ENCODE measurements at regions of chr1 and their contacts with region 1.

Region 1: DNA sequence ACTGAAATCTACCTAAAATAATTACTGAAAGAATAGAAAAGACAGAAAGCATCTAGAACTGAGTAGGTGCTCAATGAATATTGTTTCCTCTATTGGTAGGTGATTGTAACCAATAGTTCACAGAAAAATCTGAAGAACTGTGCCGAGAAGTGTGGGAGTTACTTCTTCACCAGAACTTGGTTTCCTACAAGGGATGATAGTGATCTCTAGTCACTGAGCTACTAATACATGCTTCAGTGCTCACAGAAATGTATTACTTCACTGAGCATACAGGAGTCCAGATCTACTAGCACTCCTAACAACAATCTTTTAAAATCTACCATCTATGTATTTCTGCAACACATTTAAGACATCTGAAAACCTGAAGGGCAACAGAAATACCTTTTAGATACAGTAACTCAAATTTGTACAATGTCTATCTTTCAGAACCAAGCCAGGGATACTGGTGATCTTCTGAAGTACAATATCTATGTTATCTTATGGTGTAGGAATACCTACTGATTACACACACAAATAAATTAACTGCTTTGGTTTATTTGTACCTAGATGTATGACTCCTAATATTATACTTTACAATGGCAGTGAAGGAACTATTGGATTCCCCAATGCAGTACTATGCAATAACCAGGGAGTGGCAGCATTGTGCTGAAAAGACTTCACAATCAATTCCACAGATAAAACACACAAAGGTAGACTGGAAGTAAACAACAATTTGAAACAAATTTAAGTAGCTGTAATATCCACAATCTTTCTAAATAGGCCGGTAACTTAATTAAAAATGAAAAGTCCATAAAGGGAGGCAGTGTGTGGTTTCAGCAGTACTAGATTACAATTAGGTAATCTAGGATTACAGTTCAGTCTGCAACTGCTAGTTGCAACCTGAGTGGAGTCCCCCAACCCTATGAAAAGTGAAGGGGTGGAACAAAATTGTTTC is 243.0 kb downstream of the SLC45A1 start:
- DNase-seq: no peak
- H3K4me3 Mint-ChIP-seq: peak overlapping the region; percentile 57
- H3K27ac Mint-ChIP-seq: peak overlapping the region; percentile 85
- H3K4me1 Mint-ChIP-seq: peaks cover 53% of the 10 kb centered on the region
- H3K27me3 Mint-ChIP-seq: no peaks in the 10 kb centered on the region

Region 2: DNA sequence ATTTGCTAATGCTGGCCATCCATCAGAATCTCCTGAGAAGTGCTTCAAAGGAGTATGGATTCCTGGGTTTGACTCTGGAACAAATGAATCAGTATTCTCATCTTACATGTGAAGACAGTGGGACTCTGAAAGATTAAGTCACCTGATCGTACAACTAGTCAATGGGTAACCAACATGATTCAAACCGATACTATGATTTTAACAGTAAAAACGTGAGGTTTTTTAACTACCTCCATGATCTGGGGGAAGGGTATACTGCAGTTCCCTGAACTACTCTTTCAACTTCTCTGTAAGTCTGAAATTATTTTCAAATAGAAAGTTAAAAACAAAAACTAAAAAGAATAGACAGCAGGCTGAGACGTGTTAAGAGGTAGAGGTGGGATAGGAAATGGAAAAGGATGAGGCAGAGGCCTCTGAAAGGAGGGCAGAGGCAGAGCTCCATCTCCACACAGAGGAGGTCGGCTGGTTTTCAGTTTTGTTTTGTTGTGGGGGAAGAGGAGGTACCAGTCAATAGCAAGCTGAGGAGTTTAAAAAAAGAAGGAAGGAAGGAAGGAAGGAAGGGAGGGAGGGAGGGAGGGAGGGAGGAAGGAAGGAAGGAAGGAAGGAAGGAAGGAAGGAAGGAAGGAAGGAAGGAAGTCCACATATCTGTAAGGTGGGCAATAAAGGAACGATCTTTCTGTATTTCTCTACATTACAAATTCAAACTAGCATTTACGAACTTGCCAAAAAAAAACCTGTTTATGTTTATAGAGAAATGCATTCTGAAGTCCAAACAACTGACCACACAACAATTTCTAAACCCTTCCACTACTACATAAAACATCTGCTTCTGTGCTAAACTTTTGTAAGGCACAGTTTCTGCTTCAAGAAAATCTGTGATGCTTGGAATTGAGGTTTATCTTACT is 43.4 kb after region 1 on chr1:
- intact Hi-C with region 1: loop called (anchors 2 kb)
- DNase-seq: peak; percentile 46
- H3K4me3 Mint-ChIP-seq: peak overlapping the region; percentile 72
- H3K27ac Mint-ChIP-seq: peak overlapping the region; percentile 93
- H3K4me1 Mint-ChIP-seq: peaks cover 52% of the 10 kb centered on the region
- H3K27me3 Mint-ChIP-seq: no peaks in the 10 kb centered on the region

Region 3: DNA sequence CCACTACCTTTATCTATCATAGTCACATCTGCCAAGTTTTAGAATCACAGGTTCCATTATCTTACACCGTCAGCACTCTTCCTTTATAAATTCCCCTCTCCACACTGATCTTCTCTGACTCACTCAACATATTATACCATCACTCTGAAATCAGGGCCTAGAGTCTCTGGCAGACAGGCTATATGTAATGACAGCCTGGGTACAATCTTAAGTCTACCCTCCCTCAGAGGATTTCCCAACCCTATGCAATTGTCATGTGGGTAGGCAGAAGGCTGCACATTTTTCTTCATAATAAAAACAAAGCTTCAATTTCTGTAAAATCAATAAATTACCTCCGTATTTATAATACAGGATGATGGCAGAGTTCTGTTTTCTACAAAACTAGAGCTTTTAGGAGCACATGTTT is 118.5 kb after region 1 on chr1:
- intact Hi-C with region 1: loop called (anchors 1 kb)
- DNase-seq: no peak
- H3K4me3 Mint-ChIP-seq: no peak overlapping the region
- H3K27ac Mint-ChIP-seq: no peak overlapping the region
- H3K4me1 Mint-ChIP-seq: peaks cover 52% of the 10 kb centered on the region
- H3K27me3 Mint-ChIP-seq: no peaks in the 10 kb centered on the region

Region 4: DNA sequence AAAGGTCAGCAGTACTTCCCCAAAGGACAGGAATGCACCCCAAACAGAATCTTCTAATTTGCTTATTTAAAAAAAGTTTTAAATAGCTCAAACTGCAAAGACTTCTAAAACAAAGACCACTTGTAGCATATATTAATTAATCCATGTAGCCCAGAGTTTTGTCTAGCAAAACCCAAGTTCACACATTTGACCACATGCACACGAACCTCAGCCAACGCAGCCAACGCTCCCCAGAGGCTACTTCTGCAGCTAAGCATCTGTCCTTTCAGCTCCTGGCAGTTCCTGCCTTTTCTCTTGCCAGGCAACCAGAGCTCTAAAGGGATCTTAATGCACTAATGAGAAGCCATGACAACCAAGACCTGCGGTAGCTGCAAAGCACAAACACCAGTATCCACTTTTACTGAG is 166.9 kb after region 1 on chr1:
- intact Hi-C with region 1: loop called (anchors 1 kb)
- DNase-seq: no peak
- H3K4me3 Mint-ChIP-seq: no peak overlapping the region
- H3K27ac Mint-ChIP-seq: no peak overlapping the region
- H3K4me1 Mint-ChIP-seq: peaks cover 19% of the 10 kb centered on the region
- H3K27me3 Mint-ChIP-seq: no peaks in the 10 kb centered on the region

Region 5: GRCh38 chr1:8848663-8849386 is 287.9 kb after region 1 on chr1:
- intact Hi-C with region 1: loop called (anchors 2 kb)
- DNase-seq: peak; percentile 56
- H3K4me3 Mint-ChIP-seq: no peak overlapping the region
- H3K27ac Mint-ChIP-seq: no peak overlapping the region
- H3K4me1 Mint-ChIP-seq: no peaks in the 10 kb centered on the region
- H3K27me3 Mint-ChIP-seq: no peaks in the 10 kb centered on the region

Measured in activated T-helper 2 cell treated with anti-CD3 and anti-CD28 coated beads, Interferon-gamma antibody, Interleukin-2, Interleukin-4, amounts not matched to agents 10 μg/mL and 5 μg/mL and 100 μg/mL, durations not matched to agents 14 hours and 24 hours and 36 hours (primary cell).